Vagina (tissue), 2 donors: ENCODE measurements at regions of chr17 and their contacts with region 1.

Region 1: GRCh38 chr17:80454557-80455335 is 21.7 kb downstream of the NPTX1 start:
- DNase-seq: peak in 1 of 2 donors; percentile 93
- H3K4me3 ChIP-seq: peak overlapping the region; percentile 73 to 90
- H3K27ac ChIP-seq: peak overlapping the region; percentile 93
- H3K4me1 ChIP-seq: peaks cover 35% of the 10 kb centered on the region
- H3K27me3 ChIP-seq: no peaks in the 10 kb centered on the region
- CTCF ChIP-seq: no peak
- POLR2A ChIP-seq: peak in 1 of 2 donors; percentile 79

Region 2: DNA sequence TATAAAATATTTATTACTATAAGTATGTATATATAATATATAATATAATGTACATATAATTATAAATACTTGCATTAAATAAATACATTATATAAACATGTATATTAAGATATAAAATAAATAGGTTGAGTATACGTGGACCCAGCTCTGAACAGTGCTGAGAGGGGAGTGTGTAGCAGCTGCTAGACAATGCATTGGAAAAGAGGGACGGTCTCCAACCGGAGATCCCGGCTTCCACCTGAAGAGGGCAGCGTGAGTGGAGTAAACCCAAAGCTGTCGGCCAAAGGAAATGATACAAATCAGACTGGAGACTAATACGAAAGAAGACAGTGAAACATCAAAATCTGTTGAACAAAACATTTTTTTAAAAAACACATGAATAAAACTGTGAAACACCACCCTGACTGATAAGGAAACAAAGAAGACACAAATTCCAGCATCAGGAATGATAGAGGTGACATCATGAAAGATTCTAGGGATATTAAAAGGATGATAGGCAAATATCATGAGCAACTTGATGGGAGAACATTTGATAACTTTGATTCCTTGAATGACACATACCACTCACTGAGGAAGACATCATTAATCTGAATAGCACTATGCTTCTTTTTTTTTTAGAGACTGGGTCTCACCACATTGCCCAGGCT is 411.5 kb after region 1 on chr17:
- intact Hi-C with region 1: loop called (anchors 10 kb)
- DNase-seq: no peak
- H3K4me3 ChIP-seq: no peak overlapping the region
- H3K27ac ChIP-seq: no peak overlapping the region
- H3K4me1 ChIP-seq: no peaks in the 10 kb centered on the region
- H3K27me3 ChIP-seq: no peaks in the 10 kb centered on the region
- CTCF ChIP-seq: peak; percentile 24 to 61 (median 58)
- POLR2A ChIP-seq: no peak